Astrocyte of the cerebellum (primary cell): ENCODE measurements at regions of chr4 and their contacts with region 1.

Region 1: DNA sequence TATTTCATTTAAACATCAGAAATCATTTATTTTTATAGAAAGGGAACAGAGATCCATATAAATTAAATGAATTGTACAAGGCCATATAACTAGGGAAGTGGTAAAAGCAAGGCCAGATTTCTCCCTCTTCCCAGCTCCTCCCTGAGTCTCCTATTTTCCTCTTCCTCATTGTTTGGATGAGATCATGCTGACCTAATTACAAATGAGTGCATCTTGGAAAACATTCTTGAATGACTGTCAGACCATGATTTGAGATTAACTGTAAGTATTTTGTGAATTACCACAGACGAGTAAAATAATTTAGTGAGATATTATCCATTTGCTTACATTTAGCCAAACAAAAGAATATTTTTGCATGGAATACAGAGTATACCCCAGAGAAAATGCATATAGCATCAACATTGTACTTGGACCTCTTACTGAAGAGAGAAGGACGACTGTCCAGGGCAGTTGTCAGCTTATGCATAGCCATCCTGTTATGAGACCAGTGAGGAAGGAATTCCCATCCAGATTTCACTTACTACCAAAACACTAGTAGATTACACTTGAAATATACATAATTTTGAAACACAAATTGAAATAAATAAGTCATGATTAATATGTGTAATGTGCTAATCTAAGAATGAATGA is 47.3 kb downstream of the SLAIN2 start:
- DNase-seq: no peak
- H3K4me3 ChIP-seq: no peak overlapping the region
- CTCF ChIP-seq: no peak

Region 2: GRCh38 chr4:48315728-48316630 is 72.7 kb before region 1 on chr4:
- in situ Hi-C with region 1: no loop called
- DNase-seq: no peak
- H3K4me3 ChIP-seq: no peak overlapping the region
- CTCF ChIP-seq: peak; percentile 72

Region 3: DNA sequence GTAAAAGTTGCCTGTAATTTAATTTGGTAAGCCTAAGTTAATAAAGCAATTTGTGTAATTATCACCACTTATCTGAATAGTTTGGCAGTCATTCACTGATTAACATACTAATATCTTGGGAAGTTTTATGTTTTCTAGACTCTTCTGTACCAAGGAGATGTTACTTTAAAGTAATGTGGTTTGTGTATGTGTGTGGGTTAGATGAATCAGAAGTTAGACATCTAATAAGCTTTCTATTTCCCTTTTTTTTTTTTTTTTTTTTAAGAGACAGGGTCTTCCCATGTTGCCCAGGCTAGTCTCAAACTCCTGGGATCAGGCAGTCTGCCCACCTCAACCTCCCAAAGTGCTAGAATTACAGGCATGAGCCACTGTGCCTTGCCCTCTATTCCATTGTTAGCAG is 42.0 kb before region 1 on chr4:
- in situ Hi-C with region 1: loop called (anchors 5 kb)
- DNase-seq: no peak
- H3K4me3 ChIP-seq: no peak overlapping the region
- CTCF ChIP-seq: no peak